ENCODE measurements at regions of chr1 and their contacts with region 1.

Region 1: DNA sequence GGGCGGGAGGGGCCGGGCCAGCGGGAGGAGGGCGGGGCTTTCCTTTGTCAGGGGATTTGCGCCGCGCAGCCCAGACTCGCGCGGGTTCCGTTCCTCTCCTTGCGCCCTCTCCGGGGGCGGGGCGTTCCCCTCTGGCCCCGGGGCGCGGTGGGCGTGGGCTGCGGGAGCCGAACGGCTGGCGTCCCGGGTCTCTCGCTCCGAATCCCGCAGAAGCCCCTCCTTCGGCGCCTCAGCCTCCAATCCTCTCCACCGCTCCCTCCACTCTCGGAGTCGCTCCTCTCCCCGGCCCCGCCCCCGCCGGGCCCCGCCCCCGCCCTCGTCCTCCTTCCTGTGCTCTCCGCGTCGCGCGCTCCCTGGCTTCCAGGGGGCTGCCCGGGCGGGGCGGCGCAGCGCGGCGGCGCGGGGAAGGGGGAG is 82.8 kb upstream of the BMP8A start:
- DNase-seq: peak; percentile 93
- ATAC-seq: peak; percentile 90
- H3K4me3 Mint-ChIP-seq: peak overlapping the region; percentile 86
- H3K27ac Mint-ChIP-seq: no peak overlapping the region
- H3K4me1 Mint-ChIP-seq: peaks cover 54% of the 10 kb centered on the region
- H3K27me3 Mint-ChIP-seq: no peaks in the 10 kb centered on the region; the same call in 1 of the 2 replicates
- CTCF ChIP-seq: no peak

Region 2: DNA sequence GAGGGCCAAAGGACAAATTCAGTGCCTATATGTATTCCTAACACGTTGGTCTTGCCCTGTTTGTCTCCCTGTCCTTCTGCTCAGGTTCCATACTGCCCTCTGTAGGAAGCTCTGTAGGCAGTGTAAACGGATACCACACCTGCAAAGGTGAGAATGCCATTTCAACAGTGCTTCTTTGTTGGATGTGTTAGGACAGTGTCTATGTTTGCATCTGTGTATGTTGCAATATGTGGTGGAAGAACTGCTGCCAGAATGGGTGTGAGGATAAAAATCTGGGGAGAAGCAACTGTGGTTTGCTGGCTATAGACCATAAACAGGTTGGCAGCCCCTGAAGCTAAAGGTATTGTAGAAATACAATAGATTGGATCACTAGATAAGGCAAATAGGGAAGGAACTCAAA is 30.3 kb before region 1 on chr1:
- CTCF ChIA-PET with region 1: interaction called, 23 read pairs
- POLR2A ChIA-PET with region 1: interaction called, 3 read pairs
- DNase-seq: peak; percentile 26
- ATAC-seq: peak; percentile 97
- H3K4me3 Mint-ChIP-seq: no peak overlapping the region
- H3K27ac Mint-ChIP-seq: no peak overlapping the region
- H3K4me1 Mint-ChIP-seq: no peaks in the 10 kb centered on the region
- H3K27me3 Mint-ChIP-seq: no peaks in the 10 kb centered on the region
- CTCF ChIP-seq: no peak

Region 3: GRCh38 chr1:39391691-39392679 is 16.7 kb before region 1 on chr1:
- CTCF ChIA-PET with region 1: interaction called, 27 read pairs
- POLR2A ChIA-PET with region 1: interaction called, 3 read pairs
- DNase-seq: no peak
- ATAC-seq: peak; percentile 60
- H3K4me3 Mint-ChIP-seq: peak overlapping the region; percentile 23
- H3K27ac Mint-ChIP-seq: peak overlapping the region; percentile 92
- H3K4me1 Mint-ChIP-seq: peaks cover 52% of the 10 kb centered on the region
- H3K27me3 Mint-ChIP-seq: no peaks in the 10 kb centered on the region
- CTCF ChIP-seq: no peak

Region 4: GRCh38 chr1:39398278-39399021 is 10.2 kb before region 1 on chr1:
- CTCF ChIA-PET with region 1: interaction called, 16 read pairs
- POLR2A ChIA-PET with region 1: interaction called, 3 read pairs
- DNase-seq: no peak
- ATAC-seq: peak; percentile 79
- H3K4me3 Mint-ChIP-seq: no peak overlapping the region
- H3K27ac Mint-ChIP-seq: peak overlapping the region; percentile 37; the same call in 1 of the 2 replicates
- H3K4me1 Mint-ChIP-seq: peaks cover 47% of the 10 kb centered on the region
- H3K27me3 Mint-ChIP-seq: no peaks in the 10 kb centered on the region
- CTCF ChIP-seq: no peak

Region 5: GRCh38 chr1:39453603-39454002 is 45.0 kb after region 1 on chr1:
- CTCF ChIA-PET with region 1: no interaction called
- POLR2A ChIA-PET with region 1: no interaction called
- DNase-seq: no peak
- ATAC-seq: no peak
- H3K4me3 Mint-ChIP-seq: no peak overlapping the region
- H3K27ac Mint-ChIP-seq: no peak overlapping the region
- H3K4me1 Mint-ChIP-seq: no peaks in the 10 kb centered on the region
- H3K27me3 Mint-ChIP-seq: no peaks in the 10 kb centered on the region
- CTCF ChIP-seq: no peak

Measured in WTC11 (cell line).